Activated T-helper 1 cell treated with anti-CD3 and anti-CD28 coated beads, Interleukin-12 subunit alpha, Interleukin-12 subunit beta, Interleukin-2, Interleukin-4 antibody, amounts not matched to agents 30 ng/mL and 10 ng/mL and 1 ng/mL, durations not matched to agents 14 hours and 24 hours and 36 hours (primary cell): ENCODE measurements at regions of chr19 and their contacts with region 1.

Region 1: GRCh38 chr19:41641879-41642485 is 15.1 kb upstream of the CEACAM4 start:
- DNase-seq: peak; percentile 48
- H3K4me3 Mint-ChIP-seq: no peak overlapping the region
- H3K27ac Mint-ChIP-seq: no peak overlapping the region
- H3K4me1 Mint-ChIP-seq: no peaks in the 10 kb centered on the region
- H3K27me3 Mint-ChIP-seq: no peaks in the 10 kb centered on the region

Region 2: DNA sequence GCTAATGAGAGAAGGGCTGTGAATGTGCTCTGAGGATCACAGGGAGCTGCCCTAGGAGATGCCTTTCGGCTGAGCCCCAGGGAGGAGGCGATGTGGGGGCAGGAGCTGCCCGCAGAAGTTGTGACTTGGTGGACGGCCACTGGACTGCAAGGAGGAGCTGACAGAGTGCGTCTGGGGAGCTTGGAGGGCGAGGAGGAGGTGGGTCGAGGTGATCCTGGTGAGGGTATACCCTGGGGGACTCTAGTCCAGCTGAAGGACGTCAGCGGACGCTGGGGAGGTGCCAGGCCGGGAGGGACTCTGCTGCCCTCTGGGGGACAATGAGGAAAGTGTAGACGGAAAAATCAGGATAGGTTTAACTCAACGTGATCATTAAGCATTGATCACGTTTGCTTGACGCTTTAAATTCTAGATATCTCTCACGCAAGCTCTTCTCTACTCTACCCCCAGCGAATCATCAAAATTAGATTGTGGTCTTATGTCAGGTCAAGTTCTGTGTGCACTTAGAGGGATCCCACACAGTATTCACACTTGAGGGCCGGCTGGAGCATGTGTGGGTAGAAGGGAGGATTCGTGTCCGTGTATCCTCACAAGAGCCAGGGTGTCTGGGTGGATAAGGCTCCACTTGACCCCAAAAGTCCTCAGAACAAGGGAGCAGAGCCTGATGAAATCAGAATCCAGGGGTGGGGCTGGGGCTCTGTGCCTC is 49.4 kb after region 1 on chr19:
- intact Hi-C with region 1: loop called (anchors 5 kb)
- DNase-seq: no peak
- H3K4me3 Mint-ChIP-seq: no peak overlapping the region
- H3K27ac Mint-ChIP-seq: no peak overlapping the region
- H3K4me1 Mint-ChIP-seq: no peaks in the 10 kb centered on the region
- H3K27me3 Mint-ChIP-seq: peaks cover 19% of the 10 kb centered on the region